T-cell (primary cell): ENCODE measurements at regions of chr1 and their contacts with region 1.

Region 1: GRCh38 chr1:222938986-222939385 is 124.1 kb downstream of the DISP1 start:
- DNase-seq: no peak
- ATAC-seq: no peak
- H3K4me3 ChIP-seq: no peak overlapping the region
- H3K4me3 Mint-ChIP-seq: no peak overlapping the region
- H3K27ac ChIP-seq: no peak overlapping the region
- H3K27ac Mint-ChIP-seq: no peak overlapping the region
- H3K4me1 ChIP-seq: no peaks in the 10 kb centered on the region
- H3K4me1 Mint-ChIP-seq: no peaks in the 10 kb centered on the region
- H3K27me3 ChIP-seq: no peaks in the 10 kb centered on the region
- H3K27me3 Mint-ChIP-seq: no peaks in the 10 kb centered on the region

Region 2: GRCh38 chr1:222892137-222892769 is 46.7 kb before region 1 on chr1:
- CTCF ChIA-PET with region 1: no interaction called
- POLR2A ChIA-PET with region 1: no interaction called
- DNase-seq: no peak
- ATAC-seq: no peak
- H3K4me3 ChIP-seq: no peak overlapping the region
- H3K4me3 Mint-ChIP-seq: no peak overlapping the region
- H3K27ac ChIP-seq: no peak overlapping the region
- H3K27ac Mint-ChIP-seq: no peak overlapping the region
- H3K4me1 ChIP-seq: peaks cover 0 to 2% of the 10 kb centered on the region in 2 experiments
- H3K4me1 Mint-ChIP-seq: peaks cover 11 to 14% (median 13%) of the 10 kb centered on the region in 3 donors
- H3K27me3 ChIP-seq: no peaks in the 10 kb centered on the region
- H3K27me3 Mint-ChIP-seq: no peaks in the 10 kb centered on the region

Region 3: GRCh38 chr1:223022641-223023473 is 83.9 kb after region 1 on chr1:
- CTCF ChIA-PET with region 1: no interaction called
- POLR2A ChIA-PET with region 1: no interaction called
- DNase-seq: no peak
- ATAC-seq: no peak
- H3K4me3 ChIP-seq: no peak overlapping the region
- H3K4me3 Mint-ChIP-seq: no peak overlapping the region
- H3K27ac ChIP-seq: no peak overlapping the region
- H3K27ac Mint-ChIP-seq: no peak overlapping the region
- H3K4me1 ChIP-seq: no peaks in the 10 kb centered on the region
- H3K4me1 Mint-ChIP-seq: no peaks in the 10 kb centered on the region
- H3K27me3 ChIP-seq: no peaks in the 10 kb centered on the region
- H3K27me3 Mint-ChIP-seq: no peaks in the 10 kb centered on the region

Region 4: DNA sequence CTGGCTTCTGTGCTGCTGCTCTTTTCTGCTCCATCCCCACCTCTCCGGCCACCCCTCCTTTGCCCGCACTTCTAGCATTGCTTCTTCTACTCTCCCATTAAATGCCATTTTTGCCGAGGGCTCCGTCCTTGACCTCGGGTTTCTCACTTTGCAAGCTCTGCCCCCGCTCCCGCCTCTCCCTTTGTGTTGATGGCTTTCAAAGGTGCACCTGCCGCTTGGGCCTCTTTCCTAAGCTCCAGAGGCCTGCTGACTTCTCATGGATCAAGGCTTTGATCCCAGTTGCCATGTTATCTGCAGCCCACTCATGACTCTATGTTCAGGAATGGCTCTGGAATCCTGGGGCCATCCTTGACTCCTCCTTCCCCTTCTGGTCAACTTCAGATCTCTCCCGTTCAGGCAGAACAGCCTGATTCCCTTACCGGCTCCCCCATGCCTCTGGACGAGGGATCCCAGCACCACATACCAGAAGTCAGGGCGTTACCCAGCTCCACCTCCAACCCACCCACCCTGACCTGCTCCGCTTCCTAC is 149.8 kb after region 1 on chr1:
- CTCF ChIA-PET with region 1: interaction called in 1 of 2 experiments, 14 read pairs
- POLR2A ChIA-PET with region 1: no interaction called
- DNase-seq: no peak
- ATAC-seq: no peak
- H3K4me3 ChIP-seq: no peak overlapping the region
- H3K4me3 Mint-ChIP-seq: no peak overlapping the region
- H3K27ac ChIP-seq: no peak overlapping the region
- H3K27ac Mint-ChIP-seq: no peak overlapping the region
- H3K4me1 ChIP-seq: no peaks in the 10 kb centered on the region
- H3K4me1 Mint-ChIP-seq: peaks cover 8 to 11% (median 9%) of the 10 kb centered on the region in 3 donors
- H3K27me3 ChIP-seq: peaks cover 0 to 6% of the 10 kb centered on the region in 2 experiments
- H3K27me3 Mint-ChIP-seq: no peaks in the 10 kb centered on the region